Activated CD4-positive, alpha-beta memory T cell treated with anti-CD3 and anti-CD28 coated beads for 36 hours (primary cell): ENCODE measurements at regions of chr10 and their contacts with region 1.

Region 1: DNA sequence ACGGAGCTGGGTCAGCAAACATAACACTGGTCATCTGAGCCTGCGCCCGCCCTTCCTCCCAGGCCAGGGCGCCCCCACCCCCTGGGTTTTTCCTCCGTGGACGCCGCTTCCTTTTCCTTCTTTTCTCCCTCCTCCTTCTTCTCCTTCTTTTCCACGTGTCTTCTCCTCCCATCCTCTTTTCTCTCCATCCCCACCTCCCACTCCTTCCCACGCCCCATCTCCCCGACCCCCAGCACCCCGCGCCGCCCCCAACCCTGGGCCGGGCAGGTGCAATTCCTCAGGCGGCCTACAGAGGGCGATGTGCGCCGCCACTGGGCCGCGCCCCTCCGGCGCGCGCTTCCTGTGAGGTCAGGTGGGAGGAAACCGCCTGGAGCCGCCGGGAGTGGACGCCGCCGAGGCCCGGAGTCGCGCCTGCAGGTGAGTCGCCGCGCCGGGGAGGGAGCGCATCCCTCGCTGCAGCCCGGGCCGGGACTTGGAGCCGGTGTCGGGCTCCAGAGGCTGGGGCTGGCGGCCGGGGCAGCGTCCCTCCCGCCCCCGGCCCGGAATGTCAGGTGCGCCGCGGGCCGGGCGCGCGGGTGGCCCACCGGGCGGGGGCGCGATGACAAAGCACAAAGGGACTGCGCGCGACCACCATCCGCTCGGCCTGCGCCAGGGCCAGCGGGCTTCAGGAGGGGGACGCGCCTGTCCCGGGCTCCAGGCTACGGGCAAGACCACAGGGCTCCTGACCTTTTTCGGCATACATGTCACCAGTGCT is at the start of gene FAM241B:
- DNase-seq: peak; percentile 87
- H3K4me3 Mint-ChIP-seq: peak within 1 kb of the TSS; percentile 67
- H3K27ac Mint-ChIP-seq: no peak within 1 kb of the TSS
- H3K4me1 Mint-ChIP-seq: peaks cover 5% of the 10 kb centered on the region
- H3K27me3 Mint-ChIP-seq: no peaks in the 10 kb centered on the region
- total RNA-seq, gene FAM241B: 10.9 to 11.8 TPM

Region 2: DNA sequence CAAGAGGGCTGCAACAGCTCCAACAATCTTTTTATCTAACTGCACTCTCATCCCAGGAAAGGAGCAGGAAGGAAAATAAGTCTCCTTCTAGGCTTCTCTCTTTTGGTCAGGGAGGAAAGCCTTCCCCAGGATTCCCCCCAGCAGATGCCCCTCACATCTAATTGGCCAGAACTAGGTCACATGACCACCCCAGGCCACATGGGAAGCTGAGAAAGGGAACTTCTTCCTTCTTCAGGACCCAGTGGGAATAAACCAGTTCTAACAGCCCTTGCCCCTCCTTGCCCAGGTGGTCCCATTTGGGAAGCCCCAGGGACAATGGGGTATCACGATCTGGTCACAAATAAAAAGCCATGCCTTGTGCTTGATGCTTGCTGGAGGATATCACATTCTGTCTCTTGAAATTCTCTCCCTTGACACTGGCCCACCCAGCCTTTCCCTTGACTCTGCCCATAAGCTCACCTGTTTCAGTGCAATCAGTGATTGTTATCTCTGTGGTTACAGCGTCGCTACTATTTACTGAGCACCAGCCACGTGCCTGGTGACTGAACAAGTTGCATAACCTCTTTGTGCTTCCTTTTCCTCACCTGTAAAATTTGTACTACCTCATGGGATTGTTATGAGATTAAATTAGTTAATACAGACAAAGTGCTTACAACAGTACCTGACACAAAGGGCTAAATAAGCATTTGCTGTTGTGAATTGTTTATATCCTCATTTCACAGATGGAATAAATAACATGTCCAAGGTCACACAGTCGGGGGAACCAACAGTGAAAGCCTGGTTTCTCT is 204.4 kb before region 1 on chr10:
- CTCF ChIA-PET with region 1: no interaction called
- POLR2A ChIA-PET with region 1: no interaction called
- intact Hi-C with region 1: loop called (anchors 5 kb)
- DNase-seq: peak; percentile 35
- H3K4me3 Mint-ChIP-seq: no peak overlapping the region
- H3K27ac Mint-ChIP-seq: peak overlapping the region; percentile 54
- H3K4me1 Mint-ChIP-seq: peaks cover 49% of the 10 kb centered on the region
- H3K27me3 Mint-ChIP-seq: no peaks in the 10 kb centered on the region

Region 3: DNA sequence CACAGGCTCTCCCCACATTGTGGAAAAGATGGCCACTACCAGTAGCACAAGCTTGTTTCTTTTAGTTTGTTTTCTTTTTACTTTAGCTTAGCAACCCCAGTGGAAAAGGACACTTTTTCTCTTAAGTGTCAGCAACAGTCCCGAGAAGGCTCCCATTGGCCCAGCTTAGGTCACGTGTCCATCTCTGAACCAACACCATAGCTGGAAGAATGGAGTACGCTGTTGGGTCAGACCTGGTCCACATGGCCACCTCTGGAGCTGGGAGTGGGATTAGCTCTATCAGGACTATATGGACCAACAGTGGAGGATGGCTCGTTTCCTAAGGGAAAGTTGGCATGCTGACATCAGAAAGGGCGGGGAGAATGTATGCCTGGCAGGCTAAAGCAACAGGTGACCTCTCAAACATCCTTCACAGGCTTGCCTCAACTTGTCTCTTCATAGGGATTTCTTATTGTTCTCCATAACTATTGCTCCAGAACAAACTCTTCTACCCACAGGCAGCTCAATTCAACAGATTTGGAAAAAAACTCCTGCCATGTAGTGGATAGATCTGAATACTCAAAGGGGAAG is 29.2 kb before region 1 on chr10:
- CTCF ChIA-PET with region 1: no interaction called
- POLR2A ChIA-PET with region 1: no interaction called
- intact Hi-C with region 1: no loop called
- DNase-seq: no peak
- H3K4me3 Mint-ChIP-seq: no peak overlapping the region
- H3K27ac Mint-ChIP-seq: no peak overlapping the region
- H3K4me1 Mint-ChIP-seq: no peaks in the 10 kb centered on the region
- H3K27me3 Mint-ChIP-seq: peaks cover 26% of the 10 kb centered on the region

Region 4: DNA sequence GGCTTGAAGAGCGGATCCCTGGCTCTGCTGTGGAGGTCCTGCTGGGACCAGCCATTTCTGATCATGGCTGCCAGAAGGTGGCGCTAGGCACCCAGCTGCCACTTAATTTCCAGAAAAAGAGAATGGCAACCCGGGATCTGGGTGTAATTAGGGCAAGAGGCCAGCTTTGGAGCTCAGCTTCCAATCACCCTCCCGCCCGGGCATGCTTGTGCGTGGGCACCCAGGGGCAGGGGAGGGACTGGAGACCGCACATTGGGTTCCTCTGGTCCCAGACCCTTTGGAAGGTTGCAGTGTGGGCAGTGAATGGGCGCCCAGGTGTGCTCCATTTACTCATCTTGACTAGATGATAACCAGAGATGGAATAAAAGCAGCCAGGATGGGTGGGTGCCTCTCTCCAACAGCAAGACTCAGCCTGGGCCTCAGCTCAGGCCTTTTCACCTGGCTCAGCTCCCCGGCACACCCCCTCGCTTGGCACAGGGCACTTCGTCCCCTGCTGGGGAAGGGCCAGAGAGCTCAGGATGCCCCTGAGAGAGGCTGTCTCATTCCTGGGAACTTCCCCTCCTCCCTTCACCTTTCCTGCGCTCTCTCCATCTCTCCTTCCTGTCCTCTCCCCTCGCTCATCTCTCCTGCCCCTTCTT is 14.7 kb after region 1 on chr10:
- CTCF ChIA-PET with region 1: interaction called, 16 read pairs
- POLR2A ChIA-PET with region 1: interaction called, 3 read pairs
- intact Hi-C with region 1: no loop called
- DNase-seq: peak; percentile 62
- H3K4me3 Mint-ChIP-seq: no peak overlapping the region
- H3K27ac Mint-ChIP-seq: no peak overlapping the region
- H3K4me1 Mint-ChIP-seq: no peaks in the 10 kb centered on the region
- H3K27me3 Mint-ChIP-seq: no peaks in the 10 kb centered on the region